ENCODE measurements at regions of chr5 and their contacts with region 1.

Region 1: DNA sequence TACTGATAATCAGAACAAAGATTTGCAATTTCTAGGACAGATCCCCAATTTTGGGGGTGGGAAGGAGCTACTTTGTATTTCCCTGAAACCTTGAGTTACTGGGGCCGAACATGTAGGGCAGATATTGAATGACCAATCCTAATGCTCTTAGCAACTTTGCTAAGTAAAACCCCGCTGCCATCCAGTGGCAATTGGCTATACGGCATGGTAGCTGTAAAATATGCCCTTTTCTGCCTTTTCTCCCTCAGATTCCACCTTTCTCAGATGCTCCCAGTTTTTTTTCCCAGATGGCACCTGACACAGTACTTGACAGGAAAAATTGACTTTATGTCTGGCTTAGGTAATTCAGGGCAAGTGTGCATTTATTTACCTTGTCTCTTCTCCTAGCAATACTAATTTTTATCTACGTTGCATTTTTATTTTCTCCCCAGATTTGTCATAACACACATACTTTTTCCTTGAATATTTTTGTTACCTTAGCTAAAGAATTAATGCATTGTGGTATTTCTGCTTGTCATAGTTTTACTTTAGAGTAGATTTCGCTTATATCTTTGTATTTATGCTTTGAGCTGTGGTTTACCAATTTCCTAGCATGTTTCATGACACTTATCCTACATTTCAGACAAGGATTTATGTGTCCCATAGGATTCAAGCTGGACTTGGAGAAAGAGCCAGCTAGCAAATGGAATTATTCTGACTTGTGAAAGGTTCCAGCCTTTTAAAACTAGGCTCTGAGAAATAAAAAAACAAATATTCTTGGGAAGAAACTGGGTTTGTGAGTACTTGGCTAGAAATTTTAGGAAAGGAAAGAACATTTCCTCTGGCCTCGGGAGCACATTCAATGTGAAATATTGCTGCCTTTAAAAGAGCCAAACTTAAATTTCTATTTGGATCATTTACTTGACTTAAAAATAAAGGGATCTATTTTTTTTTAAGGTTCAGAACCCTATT is 37.4 kb downstream of the PIK3R1 start:
- DNase-seq: peak; percentile 91
- H3K4me3 ChIP-seq: no peak overlapping the region
- H3K27ac ChIP-seq: peak overlapping the region; percentile 53
- H3K4me1 ChIP-seq: peaks cover 46% of the 10 kb centered on the region
- H3K27me3 ChIP-seq: no peaks in the 10 kb centered on the region

Region 2: GRCh38 chr5:67246108-67246507 is 1006.8 kb before region 1 on chr5:
- in situ Hi-C with region 1: loop called (anchors 10 kb)
- DNase-seq: peak; percentile 74
- H3K4me3 ChIP-seq: no peak overlapping the region
- H3K27ac ChIP-seq: no peak overlapping the region
- H3K4me1 ChIP-seq: no peaks in the 10 kb centered on the region
- H3K27me3 ChIP-seq: no peaks in the 10 kb centered on the region

Region 3: DNA sequence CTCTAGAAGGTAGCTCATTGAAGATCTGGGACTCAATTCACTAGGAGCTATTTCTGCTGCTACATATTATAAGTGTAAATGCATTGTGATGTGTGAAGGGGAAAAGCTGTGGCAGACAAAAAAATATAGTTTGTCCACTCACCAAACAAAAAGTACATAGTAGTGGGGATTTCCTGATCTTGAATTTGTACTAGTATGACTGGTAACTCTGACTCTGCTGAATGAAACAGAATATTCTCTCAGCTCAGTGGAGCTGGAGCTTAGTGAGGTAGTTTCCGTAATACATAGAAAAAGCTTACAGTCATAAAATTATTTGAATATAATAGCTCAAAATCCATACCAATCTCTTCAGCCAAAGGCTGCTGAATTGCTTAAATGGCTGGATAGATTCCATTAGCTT is 600.7 kb before region 1 on chr5:
- in situ Hi-C with region 1: loop called (anchors 25 kb)
- DNase-seq: no peak
- H3K4me3 ChIP-seq: no peak overlapping the region
- H3K27ac ChIP-seq: no peak overlapping the region
- H3K4me1 ChIP-seq: peaks cover 14% of the 10 kb centered on the region
- H3K27me3 ChIP-seq: no peaks in the 10 kb centered on the region